Cardiac septum (tissue), 1 donor: ENCODE measurements at regions of chr5 and their contacts with region 1.

Region 1: GRCh38 chr5:128844354-128844923 is 120.8 kb upstream of the SLC27A6 start:
- DNase-seq: no peak

Region 2: DNA sequence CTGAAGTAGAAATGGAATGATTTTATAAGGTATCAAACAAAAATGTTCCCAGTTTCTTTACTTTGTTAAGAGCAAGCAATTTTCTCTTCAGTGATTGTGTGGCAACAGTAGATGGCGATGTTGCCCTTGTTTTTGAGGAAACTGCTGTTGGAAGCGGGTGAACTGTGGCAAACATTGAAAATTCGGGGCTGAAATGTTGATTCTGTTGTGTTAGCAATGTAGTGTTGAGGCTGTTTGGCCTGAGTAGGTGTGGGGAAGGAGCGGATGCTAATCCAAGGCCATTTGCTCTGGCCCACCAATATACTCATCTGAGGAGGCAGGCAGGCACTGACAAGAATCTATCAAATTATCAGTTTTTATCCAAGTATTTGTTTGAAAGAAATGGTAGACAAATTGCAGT is 631.1 kb before region 1 on chr5:
- intact Hi-C with region 1: loop called (anchors 5 kb)
- DNase-seq: no peak

Region 3: DNA sequence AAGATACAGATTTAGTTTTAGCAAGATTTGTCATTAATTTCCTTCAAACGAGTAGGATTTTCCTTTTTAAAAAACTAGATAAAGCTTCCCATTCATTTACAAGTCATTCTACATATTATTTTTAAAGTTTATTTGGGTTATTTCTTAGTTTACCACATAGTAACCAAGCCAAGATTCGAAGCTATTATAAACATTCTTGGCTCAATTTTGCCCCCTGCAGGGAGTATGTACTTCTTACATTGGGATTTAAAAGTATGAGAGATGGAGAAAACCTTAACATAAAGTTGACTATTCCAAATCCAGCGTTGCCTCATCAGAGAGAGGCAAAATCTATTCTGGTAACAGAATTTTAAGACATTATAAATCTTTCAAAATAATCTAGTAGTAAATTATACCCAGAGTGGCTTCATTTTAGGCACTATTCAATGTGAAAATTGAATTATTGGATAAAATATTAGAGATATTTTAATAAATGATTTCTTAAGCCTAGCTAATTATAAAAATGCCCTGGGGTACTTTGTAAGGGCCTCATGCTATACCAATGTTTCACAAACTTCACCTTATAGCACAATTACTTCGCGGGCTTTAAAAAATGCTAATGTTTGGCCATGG is 345.5 kb before region 1 on chr5:
- intact Hi-C with region 1: loop called (anchors 10 kb)
- DNase-seq: no peak

Region 4: GRCh38 chr5:128667152-128667551 is 177.3 kb before region 1 on chr5:
- intact Hi-C with region 1: loop called (anchors 5 kb)
- DNase-seq: no peak